GM12878 (cell line): ENCODE measurements at regions of chr2 and their contacts with region 1.

Region 1: GRCh38 chr2:197304556-197305011 is 6.0 kb downstream of the ANKRD44 start:
- DNase-seq: no peak
- ATAC-seq: peak; percentile 43
- H3K4me3 ChIP-seq: peak overlapping the region; percentile 67
- H3K27ac ChIP-seq: peak overlapping the region; percentile 99
- H3K4me1 ChIP-seq: peaks cover 62% of the 10 kb centered on the region
- H3K27me3 ChIP-seq: no peaks in the 10 kb centered on the region
- CTCF ChIP-seq: no peak
- EP300 ChIP-seq: no peak
- POLR2A ChIP-seq: peak; percentile 34; the same call in 1 of the 2 replicates
- RAD21 ChIP-seq: no peak

Region 2: DNA sequence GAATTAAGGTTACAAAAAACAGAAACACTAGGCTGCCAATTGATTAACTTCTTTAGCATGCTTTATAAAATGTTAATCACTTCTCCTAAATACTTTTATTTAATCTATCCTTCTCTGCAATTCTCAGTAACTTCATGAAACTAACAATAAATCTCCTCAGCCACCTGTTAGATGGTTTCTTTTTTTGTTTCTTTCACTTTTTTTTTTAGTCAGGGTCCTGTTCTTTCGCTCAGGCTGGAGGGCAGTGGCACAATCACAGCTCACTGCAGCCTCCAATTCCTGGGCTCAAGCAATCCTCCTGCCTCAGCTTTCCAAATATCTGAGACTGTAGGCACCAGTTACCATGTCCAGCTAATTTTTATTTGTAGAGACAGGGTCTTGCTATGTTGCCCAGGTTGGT is 919.9 kb before region 1 on chr2:
- CTCF ChIA-PET with region 1: no interaction called
- POLR2A ChIA-PET with region 1: no interaction called
- RAD21 ChIA-PET with region 1: no interaction called
- SMC1A ChIA-PET with region 1: no interaction called
- in situ Hi-C with region 1: no loop called
- intact Hi-C with region 1: no loop called
- DNase-seq: no peak
- ATAC-seq: peak; percentile 56
- H3K4me3 ChIP-seq: peak overlapping the region; percentile 21
- H3K27ac ChIP-seq: peak overlapping the region; percentile 63
- H3K4me1 ChIP-seq: peaks cover 34% of the 10 kb centered on the region
- H3K27me3 ChIP-seq: no peaks in the 10 kb centered on the region
- CTCF ChIP-seq: no peak
- EP300 ChIP-seq: no peak
- POLR2A ChIP-seq: no peak
- RAD21 ChIP-seq: no peak

Region 3: GRCh38 chr2:197216361-197216979 is 88.1 kb before region 1 on chr2:
- CTCF ChIA-PET with region 1: interaction called, 34 read pairs
- POLR2A ChIA-PET with region 1: interaction called, 31 read pairs
- RAD21 ChIA-PET with region 1: interaction called, 408 read pairs
- SMC1A ChIA-PET with region 1: interaction called, 433 read pairs
- in situ Hi-C with region 1: no loop called
- intact Hi-C with region 1: loop called (anchors 2 kb)
- DNase-seq: peak; percentile 80
- ATAC-seq: peak; percentile 73
- H3K4me3 ChIP-seq: peak overlapping the region; percentile 34
- H3K27ac ChIP-seq: peak overlapping the region; percentile 82
- H3K4me1 ChIP-seq: peaks cover 70% of the 10 kb centered on the region
- H3K27me3 ChIP-seq: no peaks in the 10 kb centered on the region
- CTCF ChIP-seq: no peak
- EP300 ChIP-seq: peak; percentile 46 to 74; a peak in 3 of 4 replicates
- POLR2A ChIP-seq: 0 out of 2 replicates have a peak, but pooled peaks have one; percentile 23
- RAD21 ChIP-seq: 0 out of 2 replicates have a peak, but pooled peaks have one; percentile 16

Region 4: DNA sequence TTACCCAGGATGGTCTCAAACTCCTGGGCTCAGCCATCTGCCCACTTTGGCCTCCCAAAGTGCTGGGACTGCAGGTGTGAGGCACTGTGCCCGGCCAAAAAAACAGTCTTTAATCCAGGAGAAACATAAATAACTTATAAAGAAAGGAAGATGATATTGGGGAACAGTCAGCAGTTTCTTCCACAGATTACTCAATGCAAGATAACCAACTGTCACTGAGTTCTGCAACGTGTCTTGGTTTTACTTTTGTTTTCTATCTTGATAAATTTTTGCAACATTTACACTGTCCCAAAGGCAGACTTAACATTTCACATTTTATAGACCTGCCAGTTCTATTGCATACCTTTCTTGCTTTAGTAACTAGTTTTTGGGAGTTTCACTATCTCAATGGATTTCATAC is 65.2 kb before region 1 on chr2:
- CTCF ChIA-PET with region 1: interaction called, 6 read pairs
- POLR2A ChIA-PET with region 1: interaction called, 19 read pairs
- RAD21 ChIA-PET with region 1: interaction called, 25 read pairs
- SMC1A ChIA-PET with region 1: interaction called, 28 read pairs
- in situ Hi-C with region 1: no loop called
- intact Hi-C with region 1: no loop called
- DNase-seq: no peak
- ATAC-seq: peak; percentile 82
- H3K4me3 ChIP-seq: peak overlapping the region; percentile 56
- H3K27ac ChIP-seq: peak overlapping the region; percentile 77
- H3K4me1 ChIP-seq: peaks cover 49% of the 10 kb centered on the region
- H3K27me3 ChIP-seq: no peaks in the 10 kb centered on the region
- CTCF ChIP-seq: no peak
- EP300 ChIP-seq: no peak
- POLR2A ChIP-seq: no peak
- RAD21 ChIP-seq: no peak

Region 5: DNA sequence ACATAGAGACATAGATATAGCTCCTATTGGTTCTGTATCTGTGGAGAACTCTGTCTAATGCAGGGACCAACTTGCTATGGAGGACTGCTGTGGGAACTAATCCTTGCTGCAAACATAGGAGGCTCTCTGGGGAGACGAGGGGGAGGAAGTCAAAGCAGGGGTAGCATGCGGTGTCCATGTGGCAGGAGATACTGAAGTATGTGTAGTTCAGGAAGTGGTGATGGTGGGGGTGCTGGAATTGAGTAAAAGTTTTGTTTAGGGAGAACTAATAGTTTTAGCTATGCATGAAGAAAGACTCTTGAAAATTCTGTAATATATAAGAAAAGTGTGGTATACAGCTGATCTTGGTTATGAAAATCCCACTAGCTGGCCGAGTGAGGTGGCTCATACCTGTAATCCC is 56.0 kb before region 1 on chr2:
- CTCF ChIA-PET with region 1: interaction called, 3 read pairs
- POLR2A ChIA-PET with region 1: interaction called, 5 read pairs
- RAD21 ChIA-PET with region 1: interaction called, 43 read pairs
- SMC1A ChIA-PET with region 1: interaction called, 165 read pairs
- in situ Hi-C with region 1: no loop called
- intact Hi-C with region 1: no loop called
- DNase-seq: no peak
- ATAC-seq: peak; percentile 45
- H3K4me3 ChIP-seq: no peak overlapping the region
- H3K27ac ChIP-seq: peak overlapping the region; percentile 76
- H3K4me1 ChIP-seq: peaks cover 19% of the 10 kb centered on the region
- H3K27me3 ChIP-seq: no peaks in the 10 kb centered on the region
- CTCF ChIP-seq: no peak
- EP300 ChIP-seq: no peak
- POLR2A ChIP-seq: no peak
- RAD21 ChIP-seq: no peak

Region 6: GRCh38 chr2:197261808-197262226 is 42.8 kb before region 1 on chr2:
- CTCF ChIA-PET with region 1: interaction called, 68 read pairs
- POLR2A ChIA-PET with region 1: interaction called, 85 read pairs
- RAD21 ChIA-PET with region 1: interaction called, 178 read pairs
- SMC1A ChIA-PET with region 1: interaction called, 165 read pairs
- in situ Hi-C with region 1: no loop called
- intact Hi-C with region 1: no loop called
- DNase-seq: peak; percentile 91
- ATAC-seq: peak; percentile 67
- H3K4me3 ChIP-seq: peak overlapping the region; percentile 12; the same call in 1 of the 2 replicates
- H3K27ac ChIP-seq: peak overlapping the region; percentile 87
- H3K4me1 ChIP-seq: peaks cover 63% of the 10 kb centered on the region
- H3K27me3 ChIP-seq: no peaks in the 10 kb centered on the region
- CTCF ChIP-seq: no peak
- EP300 ChIP-seq: peak in 1 of 2 experiments; percentile 77; a peak in 3 of 4 replicates
- POLR2A ChIP-seq: peak; percentile 38
- RAD21 ChIP-seq: no peak